ENCODE measurements at regions of chr11 and their contacts with region 1.

Region 1: DNA sequence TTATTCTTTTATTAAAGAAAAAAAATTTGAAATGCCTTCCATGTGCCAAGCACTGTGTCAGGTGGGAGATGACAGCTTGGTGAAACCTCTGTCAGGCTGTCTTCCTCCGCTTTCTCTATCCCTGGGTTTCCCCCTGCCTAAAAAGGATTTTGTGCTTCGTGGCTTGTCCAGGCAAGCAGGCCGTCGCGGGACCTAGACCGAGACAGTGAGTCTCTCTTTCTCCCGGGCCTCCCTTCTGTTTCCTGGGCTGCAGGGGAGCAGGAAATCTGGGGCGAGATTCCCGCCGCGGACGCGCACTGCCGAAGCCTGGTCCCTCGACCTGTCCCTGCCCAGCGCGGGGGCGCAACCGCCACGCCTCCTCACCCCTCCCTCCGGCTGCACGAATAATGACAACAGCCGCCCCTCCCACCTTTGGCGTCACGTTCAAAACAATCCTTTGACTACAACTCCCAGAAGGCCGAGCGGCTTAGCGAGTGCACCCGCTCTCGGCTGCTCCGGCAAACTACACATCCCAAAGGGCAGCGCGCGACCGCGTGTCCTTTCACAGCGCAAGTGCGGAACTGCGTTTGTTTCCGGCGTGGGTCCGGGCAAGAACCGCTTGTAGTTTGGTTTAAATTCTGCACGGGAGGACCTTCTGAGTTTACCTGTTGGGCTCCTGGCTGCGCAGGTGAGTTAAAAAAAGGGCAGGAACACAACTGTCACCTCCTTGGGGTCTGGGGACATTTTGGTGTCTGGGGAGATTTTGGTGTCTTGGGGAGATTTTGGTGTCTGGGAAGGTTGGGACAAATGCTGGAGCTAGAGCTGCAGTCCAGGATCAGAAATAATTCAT is at the start of gene CLP1:
- DNase-seq: peak; percentile 99 to 100 (median 100)

Region 2: GRCh38 chr11:57667736-57668435 is 10.5 kb after region 1 on chr11 and contains the start of gene ZDHHC5:
- intact Hi-C with region 1: loop called (anchors 1 kb)
- DNase-seq: peak; percentile 98 to 100 (median 99)

Region 3: DNA sequence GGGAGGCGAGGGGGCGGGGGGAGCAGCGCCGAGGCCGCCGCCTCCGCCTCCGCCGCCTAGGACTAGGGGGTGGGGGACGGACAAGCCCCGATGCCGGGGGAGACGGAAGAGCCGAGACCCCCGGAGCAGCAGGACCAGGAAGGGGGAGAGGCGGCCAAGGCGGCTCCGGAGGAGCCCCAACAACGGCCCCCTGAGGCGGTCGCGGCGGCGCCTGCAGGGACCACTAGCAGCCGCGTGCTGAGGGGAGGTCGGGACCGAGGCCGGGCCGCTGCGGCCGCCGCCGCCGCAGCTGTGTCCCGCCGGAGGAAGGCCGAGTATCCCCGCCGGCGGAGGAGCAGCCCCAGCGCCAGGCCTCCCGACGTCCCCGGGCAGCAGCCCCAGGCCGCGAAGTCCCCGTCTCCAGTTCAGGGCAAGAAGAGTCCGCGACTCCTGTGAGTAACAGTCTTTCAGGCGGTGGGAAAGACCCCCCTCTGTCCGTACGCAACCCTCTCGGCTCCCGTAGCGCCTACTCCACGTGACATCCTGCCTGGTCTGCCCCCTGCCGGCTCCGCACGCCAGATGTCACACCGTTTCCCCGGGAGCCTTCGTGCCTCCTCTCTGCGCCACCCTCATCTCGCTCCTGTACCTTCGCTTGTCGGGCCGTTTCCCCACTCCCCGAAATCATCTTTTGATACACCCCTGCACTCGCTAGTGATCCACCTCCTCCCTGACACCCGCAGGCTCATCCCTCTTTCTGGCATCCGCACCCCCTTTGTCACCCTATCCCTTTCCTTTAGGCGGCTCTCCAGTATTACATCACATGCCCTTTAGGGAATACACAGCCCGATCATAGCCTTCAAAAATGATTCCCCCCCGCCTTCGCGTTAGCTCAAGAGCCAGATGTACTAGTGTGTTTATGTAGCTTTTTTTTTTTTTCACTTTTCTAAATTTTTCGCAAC is 922.1 kb after region 1 on chr11:
- intact Hi-C with region 1: loop called (anchors 5 kb)
- DNase-seq: peak; percentile 85 to 98 (median 95)

Measured in head of caudate nucleus (tissue), 42 donors.